Dorsolateral prefrontal cortex (tissue), 120 donors: ENCODE measurements at regions of chr1 and their contacts with region 1.

Region 1: GRCh38 chr1:197224160-197224559 is 43.9 kb upstream of the CRB1 start:
- DNase-seq: no peak
- H3K4me3 ChIP-seq: no peak overlapping the region
- H3K27ac ChIP-seq: no peak overlapping the region
- H3K27me3 ChIP-seq: no peaks in the 10 kb centered on the region
- CTCF ChIP-seq: peak in 53 of 56 donors; percentile 26 to 86 (median 57)

Region 2: DNA sequence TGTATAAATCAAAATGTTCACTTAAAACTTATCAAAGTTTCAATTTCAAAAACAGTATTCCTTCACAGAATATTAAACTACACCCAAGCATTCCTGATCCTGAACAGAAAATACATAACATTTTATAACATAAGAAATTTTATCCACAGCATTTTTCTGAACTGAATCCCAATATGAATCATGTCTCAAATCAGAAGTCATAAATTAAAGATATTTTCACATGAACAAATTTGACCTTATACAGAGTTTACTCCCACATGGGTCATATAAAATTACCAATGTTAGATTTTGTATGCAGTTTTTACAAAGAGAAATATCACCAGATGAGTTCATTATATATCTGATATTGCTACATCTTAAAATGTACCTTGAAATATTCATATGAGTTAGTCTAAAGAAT is 29.1 kb before region 1 on chr1:
- intact Hi-C with region 1: no loop called
- DNase-seq: no peak
- H3K4me3 ChIP-seq: peak overlapping the region in 1 of 59 donors; percentile 1
- H3K27ac ChIP-seq: peak overlapping the region in 1 of 59 donors; percentile 20
- H3K27me3 ChIP-seq: no peaks in the 10 kb centered on the region
- CTCF ChIP-seq: no peak

Region 3: DNA sequence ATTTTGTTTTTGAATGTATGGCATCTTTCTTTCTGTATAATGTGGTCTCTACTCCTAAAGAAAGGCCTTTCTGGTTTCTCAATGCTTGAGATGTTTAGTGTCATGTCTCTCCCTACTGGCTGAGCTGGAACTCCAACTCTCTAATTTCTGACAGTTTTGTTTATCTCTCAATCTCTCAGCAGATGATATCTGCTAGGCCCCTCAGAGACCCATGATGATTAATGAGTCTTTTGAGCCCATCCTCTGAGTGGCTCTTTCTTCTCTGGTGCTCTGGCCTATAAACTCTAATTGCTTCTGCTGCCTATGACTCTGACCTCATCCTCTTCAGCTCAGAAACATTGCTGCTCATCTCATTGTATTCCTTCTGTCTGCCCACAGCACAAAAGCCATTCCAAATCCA is 90.5 kb after region 1 on chr1:
- intact Hi-C with region 1: loop called in 1 of 2 experiments (anchors 5 kb)
- DNase-seq: no peak
- H3K4me3 ChIP-seq: peak overlapping the region in 6 of 59 donors; percentile 11 to 37 (median 19)
- H3K27ac ChIP-seq: peak overlapping the region; percentile 40 to 93 (median 84)
- H3K27me3 ChIP-seq: no peaks in the 10 kb centered on the region
- CTCF ChIP-seq: peak in 51 of 56 donors; percentile 7 to 75 (median 50)

Region 4: DNA sequence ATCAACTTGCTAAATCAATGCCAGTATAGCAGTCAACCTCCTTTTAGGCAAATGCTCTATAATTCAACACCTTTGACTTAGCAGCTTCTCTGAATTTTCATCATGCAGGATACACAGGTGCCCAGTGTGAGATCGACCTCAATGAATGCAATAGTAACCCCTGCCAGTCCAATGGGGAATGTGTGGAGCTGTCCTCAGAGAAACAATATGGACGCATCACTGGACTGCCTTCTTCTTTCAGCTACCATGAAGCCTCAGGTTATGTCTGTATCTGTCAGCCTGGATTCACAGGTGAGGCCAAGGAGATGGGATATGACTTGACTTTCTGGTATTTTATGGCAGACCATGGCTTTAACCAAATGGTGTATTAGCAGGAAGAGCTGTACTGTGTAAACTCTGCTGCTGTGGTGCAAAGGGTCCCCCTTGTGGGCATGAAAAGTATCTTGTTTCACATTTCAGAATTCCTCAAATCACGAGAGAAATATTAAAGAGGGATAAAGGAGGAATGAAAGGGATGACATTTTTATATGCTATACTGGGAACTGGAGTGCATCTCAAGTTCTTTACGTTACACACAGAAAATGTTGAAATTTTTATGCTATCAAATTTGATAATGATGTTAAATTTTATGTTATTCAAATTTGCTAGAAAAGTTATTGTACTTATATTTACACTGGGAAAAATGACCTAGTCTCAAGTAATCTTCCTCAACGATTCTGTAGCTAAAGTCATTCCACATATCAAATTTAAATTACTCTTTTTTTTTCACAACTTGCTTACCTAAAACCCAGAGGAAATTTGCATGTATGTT is 132.8 kb after region 1 on chr1:
- intact Hi-C with region 1: loop called in 1 of 2 experiments (anchors 5 kb)
- DNase-seq: peak in 2 of 10 donors; percentile 8 to 34
- H3K4me3 ChIP-seq: no peak overlapping the region
- H3K27ac ChIP-seq: no peak overlapping the region
- H3K27me3 ChIP-seq: no peaks in the 10 kb centered on the region
- CTCF ChIP-seq: peak; percentile 46 to 85 (median 64)